Activated B cell treated with CpG ODN at 0.5 μM for 24 hours (primary cell): ENCODE measurements at regions of chr15 and their contacts with region 1.

Region 1: DNA sequence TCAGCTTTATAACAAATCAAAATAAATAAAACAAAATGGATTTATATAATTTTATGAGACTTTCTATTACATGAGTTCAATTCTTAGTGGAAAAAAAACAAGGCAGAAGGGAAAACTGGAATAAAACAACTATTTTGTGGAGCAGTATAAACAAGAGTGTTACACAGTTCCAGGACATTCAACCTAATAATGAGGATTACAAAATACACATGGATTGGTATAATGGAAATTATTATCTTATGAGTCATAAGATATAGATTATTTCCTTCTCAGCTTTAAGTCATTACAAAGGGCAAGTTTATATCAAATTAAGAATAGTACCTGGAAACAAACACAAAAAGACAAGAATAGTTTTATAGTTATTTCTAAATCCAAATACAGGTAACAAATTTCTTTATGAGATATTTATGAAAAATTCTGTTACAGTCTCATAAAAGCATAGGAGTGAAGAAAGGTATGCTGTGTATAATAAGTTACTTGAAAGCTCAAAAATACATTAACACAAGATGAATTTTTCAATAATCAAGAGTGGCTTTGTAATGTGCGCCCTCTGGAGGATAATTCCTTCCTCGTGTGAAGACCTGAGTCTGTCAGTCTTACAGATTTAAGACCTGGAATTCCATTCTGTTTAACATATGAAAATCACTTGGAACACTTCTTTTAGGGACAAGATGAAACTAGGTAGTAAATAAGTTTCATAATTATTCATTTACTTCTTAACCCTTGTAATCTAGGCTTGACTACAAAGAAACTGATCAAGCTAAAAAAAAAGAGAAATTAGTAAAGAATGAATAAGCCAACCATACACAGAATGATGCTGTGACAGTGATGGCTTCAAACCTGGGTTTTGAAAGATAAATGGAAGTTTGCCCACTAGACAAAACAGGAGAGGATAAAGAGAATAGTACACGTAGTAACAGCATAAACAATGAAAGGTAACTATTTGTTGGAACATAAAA is 9.5 kb downstream of the COPS2 start:
- DNase-seq: no peak
- ATAC-seq: no peak
- H3K4me3 Mint-ChIP-seq: no peak overlapping the region
- H3K27ac Mint-ChIP-seq: peak overlapping the region; percentile 3
- H3K4me1 Mint-ChIP-seq: peaks cover 40% of the 10 kb centered on the region
- H3K27me3 Mint-ChIP-seq: no peaks in the 10 kb centered on the region
- CTCF ChIP-seq: no peak

Region 2: DNA sequence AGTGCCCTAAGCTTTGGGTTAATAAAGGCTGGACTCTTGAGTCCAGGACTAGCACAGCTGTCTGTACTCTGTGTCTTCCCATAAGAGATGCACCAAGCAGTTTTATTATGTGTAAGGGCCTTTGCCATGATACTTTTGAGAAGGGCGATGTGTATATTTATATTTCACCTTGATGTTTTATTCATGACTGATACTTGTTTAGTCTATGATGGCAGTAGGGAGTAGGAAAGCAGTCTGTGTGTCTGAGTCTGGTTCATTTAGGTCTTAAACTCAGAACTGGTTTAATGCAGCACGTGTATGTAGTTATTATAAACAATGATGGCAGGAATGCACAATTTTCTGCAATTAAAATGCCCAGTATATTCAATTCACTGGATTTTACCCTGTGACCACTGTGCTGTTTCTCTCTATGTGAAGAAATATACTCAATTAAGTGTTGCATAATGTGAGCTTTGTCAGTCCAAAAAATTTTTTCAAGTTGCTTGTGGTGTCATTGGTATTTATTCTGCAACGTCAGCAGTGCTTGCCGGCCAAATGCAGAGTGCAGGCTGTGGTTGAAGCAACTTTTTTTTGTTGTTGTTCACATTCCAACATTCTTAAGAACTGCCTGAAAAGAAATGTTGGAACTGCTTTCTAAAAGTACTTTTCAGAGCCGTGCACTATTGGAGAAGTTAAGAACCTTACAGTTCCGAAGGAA is 1852.3 kb before region 1 on chr15:
- CTCF ChIA-PET with region 1: no interaction called
- POLR2A ChIA-PET with region 1: no interaction called
- intact Hi-C with region 1: no loop called
- DNase-seq: no peak
- ATAC-seq: no peak
- H3K4me3 Mint-ChIP-seq: no peak overlapping the region
- H3K27ac Mint-ChIP-seq: no peak overlapping the region
- H3K4me1 Mint-ChIP-seq: no peaks in the 10 kb centered on the region
- H3K27me3 Mint-ChIP-seq: no peaks in the 10 kb centered on the region
- CTCF ChIP-seq: no peak

Region 3: DNA sequence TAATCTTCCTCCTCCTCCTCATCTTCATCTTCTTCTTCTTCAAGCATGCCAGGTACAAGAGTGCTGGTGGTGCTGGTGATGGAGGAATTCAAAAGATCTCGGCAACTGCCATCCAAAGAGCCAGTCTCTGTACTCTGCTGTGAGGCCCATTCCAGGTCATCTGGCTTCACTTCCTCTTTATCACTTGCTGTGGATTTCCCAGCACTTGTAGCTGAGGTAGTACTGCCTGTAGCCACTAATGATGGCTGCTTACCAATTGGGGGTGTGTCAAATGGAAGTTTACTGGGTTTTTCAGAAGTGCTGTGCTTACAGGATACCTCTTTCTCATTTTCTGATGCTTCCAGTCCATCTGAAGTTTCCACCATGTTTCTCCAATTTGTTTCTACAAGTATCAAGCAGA is 153.4 kb before region 1 on chr15:
- CTCF ChIA-PET with region 1: interaction called, 4 read pairs
- POLR2A ChIA-PET with region 1: no interaction called
- intact Hi-C with region 1: loop called (anchors 5 kb)
- DNase-seq: no peak
- ATAC-seq: peak; percentile 74
- H3K4me3 Mint-ChIP-seq: no peak overlapping the region
- H3K27ac Mint-ChIP-seq: peak overlapping the region; percentile 5
- H3K4me1 Mint-ChIP-seq: peaks cover 5% of the 10 kb centered on the region
- H3K27me3 Mint-ChIP-seq: no peaks in the 10 kb centered on the region
- CTCF ChIP-seq: no peak

Region 4: GRCh38 chr15:49163678-49164077 is 17.7 kb after region 1 on chr15:
- CTCF ChIA-PET with region 1: no interaction called
- POLR2A ChIA-PET with region 1: no interaction called
- intact Hi-C with region 1: no loop called
- DNase-seq: no peak
- ATAC-seq: no peak
- H3K4me3 Mint-ChIP-seq: no peak overlapping the region
- H3K27ac Mint-ChIP-seq: no peak overlapping the region
- H3K4me1 Mint-ChIP-seq: no peaks in the 10 kb centered on the region
- H3K27me3 Mint-ChIP-seq: no peaks in the 10 kb centered on the region
- CTCF ChIP-seq: no peak